ENCODE measurements at regions of chr18 and their contacts with region 1.

Region 1: GRCh38 chr18:805008-805754 is 6.9 kb downstream of the YES1 start:
- DNase-seq: no peak
- ATAC-seq: peak; percentile 46
- H3K4me3 ChIP-seq: peak overlapping the region; percentile 24
- H3K4me3 Mint-ChIP-seq: peak overlapping the region; percentile 60 to 85 (median 78)
- H3K27ac ChIP-seq: peak overlapping the region; percentile 26
- H3K27ac Mint-ChIP-seq: peak overlapping the region in 8 of 9 donors; percentile 5 to 81 (median 58)
- H3K4me1 ChIP-seq: peaks cover 13 to 28% of the 10 kb centered on the region in 2 donors
- H3K4me1 Mint-ChIP-seq: peaks cover 38 to 88% (median 80%) of the 10 kb centered on the region in 7 donors
- H3K27me3 ChIP-seq: no peaks in the 10 kb centered on the region
- H3K27me3 Mint-ChIP-seq: peaks cover 0 to 5% (median 0%) of the 10 kb centered on the region in 5 donors

Region 2: DNA sequence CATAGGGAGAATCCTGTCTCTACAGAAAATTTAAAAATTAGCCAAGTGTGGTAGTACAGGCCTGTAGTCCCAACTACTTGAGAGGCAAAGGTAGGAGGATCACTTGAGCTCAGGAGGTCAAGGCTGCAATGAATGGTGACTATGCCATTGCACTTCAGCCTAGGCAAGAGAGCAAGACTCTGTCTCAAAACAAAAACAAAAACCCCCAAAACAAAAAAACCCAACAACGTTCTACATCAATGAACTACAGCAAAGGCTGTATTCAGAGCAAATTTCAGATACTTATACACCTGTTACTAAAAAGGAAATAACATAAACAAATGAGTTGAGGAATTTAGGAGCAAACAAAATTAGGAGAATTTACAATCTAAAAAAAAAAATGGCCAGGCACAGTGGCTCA is 15.8 kb before region 1 on chr18:
- CTCF ChIA-PET with region 1: interaction called, 3 read pairs
- POLR2A ChIA-PET with region 1: interaction called, 3 read pairs
- intact Hi-C with region 1: loop called in 1 of 2 experiments (anchors 2 kb)
- DNase-seq: no peak
- ATAC-seq: no peak
- H3K4me3 ChIP-seq: no peak overlapping the region
- H3K4me3 Mint-ChIP-seq: no peak overlapping the region
- H3K27ac ChIP-seq: no peak overlapping the region
- H3K27ac Mint-ChIP-seq: peak overlapping the region in 1 of 9 donors; percentile 37
- H3K4me1 ChIP-seq: peaks cover 0 to 8% of the 10 kb centered on the region in 2 donors
- H3K4me1 Mint-ChIP-seq: peaks cover 16 to 63% (median 44%) of the 10 kb centered on the region in 7 donors
- H3K27me3 ChIP-seq: no peaks in the 10 kb centered on the region
- H3K27me3 Mint-ChIP-seq: no peaks in the 10 kb centered on the region

Region 3: DNA sequence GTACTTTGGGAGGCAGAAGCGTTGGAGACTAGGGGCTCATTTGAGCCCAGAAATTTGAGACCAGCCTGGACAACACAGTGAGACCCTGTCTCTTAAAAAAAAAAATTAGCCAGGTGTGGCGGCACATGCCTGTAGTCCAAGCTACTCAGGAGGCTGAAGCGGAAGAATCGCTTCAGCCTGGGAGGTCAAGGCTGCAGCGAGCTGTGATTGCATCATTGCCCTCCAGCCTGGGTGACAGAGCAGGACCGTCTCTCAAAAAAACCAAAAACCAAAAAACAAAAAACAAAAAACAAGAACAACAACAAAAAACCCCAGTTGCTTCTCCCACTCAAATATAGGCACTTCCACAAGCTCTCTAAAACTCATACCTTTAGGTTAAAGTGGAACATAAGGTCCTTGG is 72.1 kb after region 1 on chr18:
- CTCF ChIA-PET with region 1: no interaction called
- POLR2A ChIA-PET with region 1: no interaction called
- intact Hi-C with region 1: no loop called
- DNase-seq: no peak
- ATAC-seq: no peak
- H3K4me3 ChIP-seq: no peak overlapping the region
- H3K4me3 Mint-ChIP-seq: no peak overlapping the region
- H3K27ac ChIP-seq: no peak overlapping the region
- H3K27ac Mint-ChIP-seq: no peak overlapping the region
- H3K4me1 ChIP-seq: peaks cover 0 to 3% of the 10 kb centered on the region in 2 donors
- H3K4me1 Mint-ChIP-seq: peaks cover 0 to 20% (median 12%) of the 10 kb centered on the region in 7 donors
- H3K27me3 ChIP-seq: no peaks in the 10 kb centered on the region
- H3K27me3 Mint-ChIP-seq: peaks cover 3 to 20% (median 6%) of the 10 kb centered on the region in 5 donors

Measured in naive thymus-derived CD4-positive, alpha-beta T cell (primary cell).